ENCODE measurements at regions of chr1 and their contacts with region 1.

Region 1: GRCh38 chr1:48776393-48777218 is at the start of gene BEND5:
- DNase-seq: peak; percentile 54
- H3K4me3 Mint-ChIP-seq: peak within 1 kb of the TSS; percentile 86
- H3K27ac Mint-ChIP-seq: peak within 1 kb of the TSS; percentile 52
- H3K4me1 Mint-ChIP-seq: peaks cover 42% of the 10 kb centered on the region
- H3K27me3 Mint-ChIP-seq: no peaks in the 10 kb centered on the region
- total RNA-seq, gene BEND5: 1.0 to 1.8 TPM

Region 2: GRCh38 chr1:47984175-47984789 is 792.3 kb before region 1 on chr1:
- CTCF ChIA-PET with region 1: no interaction called
- intact Hi-C with region 1: no loop called
- DNase-seq: no peak
- H3K4me3 Mint-ChIP-seq: no peak overlapping the region
- H3K27ac Mint-ChIP-seq: no peak overlapping the region
- H3K4me1 Mint-ChIP-seq: peaks cover 3% of the 10 kb centered on the region
- H3K27me3 Mint-ChIP-seq: peaks cover 55% of the 10 kb centered on the region

Region 3: GRCh38 chr1:48654606-48655210 is 121.9 kb before region 1 on chr1:
- CTCF ChIA-PET with region 1: no interaction called
- intact Hi-C with region 1: no loop called
- DNase-seq: no peak
- H3K4me3 Mint-ChIP-seq: no peak overlapping the region
- H3K27ac Mint-ChIP-seq: no peak overlapping the region
- H3K4me1 Mint-ChIP-seq: no peaks in the 10 kb centered on the region
- H3K27me3 Mint-ChIP-seq: no peaks in the 10 kb centered on the region

Region 4: GRCh38 chr1:48790397-48790796 is 13.8 kb after region 1 on chr1:
- CTCF ChIA-PET with region 1: no interaction called
- intact Hi-C with region 1: loop called (anchors 2 kb)
- DNase-seq: no peak
- H3K4me3 Mint-ChIP-seq: no peak overlapping the region
- H3K27ac Mint-ChIP-seq: no peak overlapping the region
- H3K4me1 Mint-ChIP-seq: peaks cover 17% of the 10 kb centered on the region
- H3K27me3 Mint-ChIP-seq: peaks cover 11% of the 10 kb centered on the region

Region 5: DNA sequence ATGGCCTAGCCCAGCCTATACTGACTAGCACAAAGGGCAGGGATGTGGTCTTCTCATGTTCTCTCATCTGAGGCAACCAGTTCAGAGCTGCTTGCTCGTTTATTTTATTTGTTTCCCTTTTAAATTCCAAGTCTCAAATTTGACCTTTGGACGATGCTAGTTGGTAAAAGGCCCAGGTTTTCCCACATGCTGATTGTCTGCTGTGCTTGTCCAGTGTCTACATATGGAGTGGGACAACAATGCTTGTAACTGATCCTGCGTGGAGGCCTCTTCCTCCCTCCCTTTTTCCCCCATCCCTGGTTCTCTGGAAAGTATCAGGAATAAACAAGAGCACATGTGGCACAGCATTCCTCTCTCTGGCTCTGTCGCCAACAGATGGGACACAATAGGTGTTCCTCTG is 34.1 kb after region 1 on chr1:
- CTCF ChIA-PET with region 1: no interaction called
- intact Hi-C with region 1: no loop called
- DNase-seq: no peak
- H3K4me3 Mint-ChIP-seq: no peak overlapping the region
- H3K27ac Mint-ChIP-seq: no peak overlapping the region
- H3K4me1 Mint-ChIP-seq: no peaks in the 10 kb centered on the region
- H3K27me3 Mint-ChIP-seq: peaks cover 10% of the 10 kb centered on the region

Region 6: DNA sequence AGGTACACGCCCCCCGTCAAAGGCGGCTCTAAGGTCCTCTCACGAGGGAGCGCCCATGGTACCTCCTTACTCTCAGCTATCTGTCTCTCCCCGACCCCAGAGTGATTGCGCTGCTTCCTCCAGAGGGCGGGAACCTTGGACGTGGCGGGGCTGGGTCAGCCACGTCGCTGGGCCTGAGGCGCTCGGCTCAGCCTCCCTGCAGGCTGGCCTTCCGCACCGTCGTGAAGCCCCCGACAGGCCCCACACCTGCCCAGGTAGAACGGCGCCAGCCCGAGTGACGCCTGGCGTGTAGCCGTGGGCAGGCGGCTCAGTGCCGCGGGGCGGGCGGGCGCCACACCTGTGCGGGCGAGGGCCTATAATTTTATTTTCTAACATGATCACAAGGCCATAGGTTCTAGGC is 122.3 kb after region 1 on chr1:
- CTCF ChIA-PET with region 1: no interaction called
- intact Hi-C with region 1: no loop called
- DNase-seq: no peak
- H3K4me3 Mint-ChIP-seq: no peak overlapping the region
- H3K27ac Mint-ChIP-seq: no peak overlapping the region
- H3K4me1 Mint-ChIP-seq: no peaks in the 10 kb centered on the region
- H3K27me3 Mint-ChIP-seq: peaks cover 24% of the 10 kb centered on the region

Measured in activated naive CD4-positive, alpha-beta T cell treated with anti-CD3 and anti-CD28 coated beads for 36 hours (primary cell).